ENCODE measurements at regions of chr1 and their contacts with region 1.

Region 1: GRCh38 chr1:93447516-93448291 is at the start of gene FNBP1L:
- DNase-seq: peak; percentile 75 to 78
- ATAC-seq: peak; percentile 87 to 91 (median 90)
- H3K4me3 ChIP-seq: peak within 1 kb of the TSS; percentile 95
- H3K27ac ChIP-seq: peak within 1 kb of the TSS; percentile 87
- H3K4me1 ChIP-seq: peaks cover 8% of the 10 kb centered on the region
- H3K27me3 ChIP-seq: no peaks in the 10 kb centered on the region
- CTCF ChIP-seq: no peak
- total RNA-seq, gene FNBP1L: 16.3 to 21.4 (median 18.9) TPM

Region 2: GRCh38 chr1:93345633-93346420 is 101.9 kb before region 1 on chr1 and contains the start of gene DR1:
- intact Hi-C with region 1: loop called in 1 of 2 experiments (anchors 5 kb)
- DNase-seq: peak; percentile 95 to 98
- ATAC-seq: peak; percentile 97 to 99 (median 98)
- H3K4me3 ChIP-seq: peak within 1 kb of the TSS; percentile 93
- H3K27ac ChIP-seq: peak within 1 kb of the TSS; percentile 94
- H3K4me1 ChIP-seq: peaks cover 27% of the 10 kb centered on the region
- H3K27me3 ChIP-seq: no peaks in the 10 kb centered on the region
- CTCF ChIP-seq: no peak
- total RNA-seq, gene DR1: 38.1 to 46.7 (median 42.6) TPM

Region 3: GRCh38 chr1:93552741-93553455 is 105.2 kb after region 1 on chr1:
- intact Hi-C with region 1: loop called (anchors 5 kb)
- DNase-seq: no peak
- ATAC-seq: peak; percentile 61 to 74 (median 70)
- H3K4me3 ChIP-seq: no peak overlapping the region
- H3K27ac ChIP-seq: peak overlapping the region; percentile 71
- H3K4me1 ChIP-seq: peaks cover 35% of the 10 kb centered on the region
- H3K27me3 ChIP-seq: no peaks in the 10 kb centered on the region
- CTCF ChIP-seq: no peak

Region 4: GRCh38 chr1:93607814-93608186 is 160.1 kb after region 1 on chr1:
- intact Hi-C with region 1: loop called in 1 of 2 experiments (anchors 5 kb)
- DNase-seq: no peak
- ATAC-seq: peak in 2 of 4 donors; percentile 10 to 25
- H3K4me3 ChIP-seq: no peak overlapping the region
- H3K27ac ChIP-seq: peak overlapping the region; percentile 86
- H3K4me1 ChIP-seq: peaks cover 76% of the 10 kb centered on the region
- H3K27me3 ChIP-seq: no peaks in the 10 kb centered on the region
- CTCF ChIP-seq: no peak

Region 5: DNA sequence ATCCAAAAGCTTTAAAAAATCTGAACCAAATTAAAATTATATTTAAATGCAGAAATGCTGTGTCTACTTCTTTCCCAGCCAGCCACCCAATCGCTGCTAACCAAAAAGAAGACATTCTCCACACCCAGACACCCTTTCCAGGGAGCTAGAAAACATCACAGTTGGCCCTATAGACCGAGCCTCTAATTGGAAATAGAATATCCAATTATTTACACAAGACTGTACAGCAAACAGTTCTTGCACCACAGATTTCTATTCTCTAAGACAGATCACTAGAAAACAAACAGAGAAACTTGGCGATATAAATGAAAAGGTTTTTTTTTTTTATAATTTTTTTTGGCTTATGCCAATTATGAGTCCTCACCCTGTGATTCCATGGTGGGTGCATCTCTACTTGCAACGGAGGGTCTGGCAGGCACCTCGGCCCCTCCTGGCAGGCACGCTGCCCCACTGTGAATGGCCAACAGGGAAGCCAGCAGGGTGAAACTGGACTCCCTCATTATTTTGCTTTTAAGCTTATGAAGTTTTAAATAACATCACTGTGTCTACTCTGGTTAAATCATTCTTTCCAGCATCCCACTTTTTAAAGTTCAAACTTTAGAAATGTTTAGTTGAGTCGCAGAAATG is 204.7 kb after region 1 on chr1:
- intact Hi-C with region 1: no loop called
- DNase-seq: no peak
- ATAC-seq: no peak
- H3K4me3 ChIP-seq: no peak overlapping the region
- H3K27ac ChIP-seq: no peak overlapping the region
- H3K4me1 ChIP-seq: no peaks in the 10 kb centered on the region
- H3K27me3 ChIP-seq: no peaks in the 10 kb centered on the region
- CTCF ChIP-seq: no peak

Region 6: GRCh38 chr1:93846211-93846991 is 398.7 kb after region 1 on chr1:
- intact Hi-C with region 1: loop called in 1 of 2 experiments (anchors 5 kb)
- DNase-seq: peak; percentile 89 to 92
- ATAC-seq: peak; percentile 61 to 75 (median 68)
- H3K4me3 ChIP-seq: peak overlapping the region; percentile 76
- H3K27ac ChIP-seq: peak overlapping the region; percentile 92
- H3K4me1 ChIP-seq: peaks cover 27% of the 10 kb centered on the region
- H3K27me3 ChIP-seq: no peaks in the 10 kb centered on the region
- CTCF ChIP-seq: peak; percentile 40

Measured in psoas muscle (tissue), 8 donors.